HepG2 (cell line): ENCODE measurements at regions of chr5 and their contacts with region 1.

Region 1: GRCh38 chr5:33936004-33936380 is 194 bp upstream of the RXFP3 start:
- DNase-seq: no peak
- ATAC-seq: peak; percentile 86
- H3K4me3 ChIP-seq: no peak overlapping the region
- H3K27ac ChIP-seq: no peak overlapping the region
- H3K4me1 ChIP-seq: no peaks in the 10 kb centered on the region
- H3K27me3 ChIP-seq: peaks cover 3 to 10% of the 10 kb centered on the region in 2 experiments; a peak in 3 of 5 replicates
- CTCF ChIP-seq: 0 out of 2 replicates have a peak, but pooled peaks have one; percentile 10
- EP300 ChIP-seq: no peak
- POLR2A ChIP-seq: no peak
- RAD21 ChIP-seq: no peak

Region 2: DNA sequence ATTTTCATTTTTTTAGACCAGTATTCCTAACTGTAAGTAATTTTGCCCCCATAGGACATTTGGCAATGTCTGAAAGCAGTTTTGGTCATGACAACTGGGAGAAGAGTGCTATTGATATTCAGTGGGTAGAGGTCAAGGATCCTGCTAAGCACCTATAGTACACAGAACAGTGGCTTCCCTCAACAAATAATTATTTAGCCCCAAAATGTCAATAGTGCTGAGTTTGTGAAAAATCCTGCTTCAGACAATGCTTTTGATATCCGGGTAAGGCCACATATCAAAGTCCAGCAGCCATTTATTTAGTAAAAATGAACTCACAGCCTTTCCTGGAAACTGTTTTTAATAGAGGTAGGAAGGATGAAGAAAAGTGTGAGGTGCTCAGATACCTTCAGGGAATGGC is 503.3 kb before region 1 on chr5:
- CTCF ChIA-PET with region 1: interaction called, 8 read pairs
- POLR2A ChIA-PET with region 1: no interaction called
- in situ Hi-C with region 1: loop called (anchors 5 kb)
- intact Hi-C with region 1: loop called (anchors 1 kb)
- DNase-seq: peak; percentile 63
- ATAC-seq: peak; percentile 81
- H3K4me3 ChIP-seq: peak overlapping the region in 1 of 3 experiments; percentile 12; a peak in 1 of 6 replicates
- H3K27ac ChIP-seq: peak overlapping the region; percentile 57
- H3K4me1 ChIP-seq: peaks cover 44% of the 10 kb centered on the region
- H3K27me3 ChIP-seq: no peaks in the 10 kb centered on the region; a peak in 1 of 5 replicates
- CTCF ChIP-seq: no peak
- EP300 ChIP-seq: peak in 1 of 2 experiments; percentile 55; a peak in 1 of 4 replicates
- POLR2A ChIP-seq: no peak
- RAD21 ChIP-seq: no peak

Region 3: DNA sequence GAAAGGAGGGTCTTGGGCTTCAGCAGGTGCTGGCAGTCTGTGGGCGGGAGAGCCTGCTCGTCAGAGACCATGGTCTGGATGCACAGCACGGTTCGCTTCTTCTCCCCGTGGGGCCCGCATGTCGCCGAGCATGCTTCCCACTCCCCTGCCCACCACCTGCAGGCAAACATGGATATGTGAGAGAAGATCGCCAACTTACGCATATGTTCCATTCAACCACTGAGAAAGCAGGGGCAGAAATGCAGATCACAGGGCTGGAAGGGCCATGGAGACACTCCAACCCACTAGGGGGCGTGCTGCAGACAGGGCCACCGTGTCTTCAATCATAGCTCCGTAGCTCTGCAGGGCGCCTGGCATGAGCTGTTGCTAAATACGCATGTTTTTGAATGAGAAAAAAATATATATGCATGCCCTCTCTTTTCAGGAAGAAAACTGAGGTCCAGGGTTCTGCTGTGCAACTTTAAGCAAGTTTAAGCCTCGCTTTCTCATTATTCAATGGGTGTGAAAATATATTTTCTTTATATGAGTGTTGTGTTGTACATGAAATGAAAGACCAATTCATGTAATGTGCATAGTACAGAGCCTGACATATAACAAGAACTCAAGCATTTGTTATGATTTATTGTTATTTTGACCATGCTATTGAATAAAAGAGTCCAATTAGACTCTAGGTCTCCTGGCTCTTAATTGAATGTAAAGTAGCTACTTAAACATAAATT is 347.2 kb before region 1 on chr5:
- CTCF ChIA-PET with region 1: no interaction called
- POLR2A ChIA-PET with region 1: no interaction called
- in situ Hi-C with region 1: loop called (anchors 10 kb)
- intact Hi-C with region 1: no loop called
- DNase-seq: peak; percentile 34
- ATAC-seq: peak; percentile 94
- H3K4me3 ChIP-seq: no peak overlapping the region
- H3K27ac ChIP-seq: no peak overlapping the region
- H3K4me1 ChIP-seq: peaks cover 1% of the 10 kb centered on the region
- H3K27me3 ChIP-seq: no peaks in the 10 kb centered on the region
- CTCF ChIP-seq: peak; percentile 70
- EP300 ChIP-seq: no peak
- POLR2A ChIP-seq: no peak
- RAD21 ChIP-seq: 0 out of 2 replicates have a peak, but pooled peaks have one; percentile 23

Region 4: GRCh38 chr5:33810491-33811120 is 125.4 kb before region 1 on chr5:
- CTCF ChIA-PET with region 1: no interaction called
- POLR2A ChIA-PET with region 1: no interaction called
- in situ Hi-C with region 1: no loop called
- intact Hi-C with region 1: loop called (anchors 10 kb)
- DNase-seq: no peak
- ATAC-seq: no peak
- H3K4me3 ChIP-seq: no peak overlapping the region
- H3K27ac ChIP-seq: no peak overlapping the region
- H3K4me1 ChIP-seq: peaks cover 9% of the 10 kb centered on the region; the same call in 1 of the 2 replicates
- H3K27me3 ChIP-seq: no peaks in the 10 kb centered on the region
- CTCF ChIP-seq: no peak
- EP300 ChIP-seq: no peak
- POLR2A ChIP-seq: no peak
- RAD21 ChIP-seq: no peak